ENCODE measurements at regions of chr9 and their contacts with region 1.

Region 1: GRCh38 chr9:37465249-37466036 is at the start of gene ZBTB5:
- DNase-seq: peak; percentile 98 to 99 (median 99)
- H3K4me3 ChIP-seq: peak within 1 kb of the TSS; percentile 95
- H3K27ac ChIP-seq: peak within 1 kb of the TSS; percentile 94 to 97
- H3K4me1 ChIP-seq: peaks cover 4% of the 10 kb centered on the region
- H3K27me3 ChIP-seq: no peaks in the 10 kb centered on the region
- CTCF ChIP-seq: no peak
- EP300 ChIP-seq: no peak
- POLR2A ChIP-seq: peak; percentile 59
- total RNA-seq, gene ZBTB5: 10.2 to 13.7 (median 11.8) TPM

Region 2: GRCh38 chr9:35756275-35757225 is 1708.9 kb before region 1 on chr9:
- intact Hi-C with region 1: loop called in 1 of 4 experiments (anchors 10 kb)
- DNase-seq: peak; percentile 73 to 81 (median 75)
- H3K4me3 ChIP-seq: peak overlapping the region; percentile 65
- H3K27ac ChIP-seq: peak overlapping the region; percentile 66 to 91
- H3K4me1 ChIP-seq: peaks cover 7% of the 10 kb centered on the region
- H3K27me3 ChIP-seq: no peaks in the 10 kb centered on the region
- CTCF ChIP-seq: peak; percentile 8 to 32 (median 31)
- EP300 ChIP-seq: no peak
- POLR2A ChIP-seq: no peak

Region 3: DNA sequence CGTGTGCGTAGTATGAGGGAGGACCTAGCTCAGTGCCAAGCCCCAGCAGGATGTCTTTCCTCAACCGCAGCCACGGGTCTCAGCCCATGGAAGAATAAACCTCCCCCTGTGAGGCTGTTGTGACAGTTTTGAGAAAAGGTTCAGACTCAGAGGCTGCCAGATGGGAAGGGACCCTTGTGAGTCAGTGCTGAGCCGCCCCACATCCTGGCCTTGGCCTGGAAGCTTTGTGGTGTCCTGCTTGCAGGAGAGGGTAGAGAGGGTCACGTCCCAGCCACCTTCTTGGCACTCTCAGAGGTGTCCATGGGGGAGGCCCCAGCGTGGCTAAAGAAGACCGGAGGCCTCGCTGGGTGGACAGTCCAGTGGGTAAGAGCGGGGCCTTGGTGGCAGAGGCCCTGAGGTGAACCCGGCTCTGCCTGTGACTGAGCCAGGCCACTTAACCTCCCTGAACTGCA is 40.1 kb before region 1 on chr9:
- intact Hi-C with region 1: loop called in 1 of 4 experiments (anchors 5 kb)
- DNase-seq: peak in 4 of 5 donors; percentile 33 to 65 (median 55)
- H3K4me3 ChIP-seq: no peak overlapping the region
- H3K27ac ChIP-seq: peak overlapping the region in 1 of 2 donors; percentile 0
- H3K4me1 ChIP-seq: peaks cover 24% of the 10 kb centered on the region
- H3K27me3 ChIP-seq: no peaks in the 10 kb centered on the region
- CTCF ChIP-seq: no peak
- EP300 ChIP-seq: no peak
- POLR2A ChIP-seq: no peak

Region 4: GRCh38 chr9:37449862-37450632 is 15.4 kb before region 1 on chr9:
- intact Hi-C with region 1: no loop called
- DNase-seq: no peak
- H3K4me3 ChIP-seq: no peak overlapping the region
- H3K27ac ChIP-seq: no peak overlapping the region
- H3K4me1 ChIP-seq: peaks cover 14% of the 10 kb centered on the region
- H3K27me3 ChIP-seq: no peaks in the 10 kb centered on the region
- CTCF ChIP-seq: no peak
- EP300 ChIP-seq: no peak
- POLR2A ChIP-seq: no peak

Region 5: GRCh38 chr9:37520641-37521040 is 55.2 kb after region 1 on chr9:
- intact Hi-C with region 1: no loop called
- DNase-seq: no peak
- H3K4me3 ChIP-seq: no peak overlapping the region
- H3K27ac ChIP-seq: no peak overlapping the region
- H3K4me1 ChIP-seq: no peaks in the 10 kb centered on the region
- H3K27me3 ChIP-seq: no peaks in the 10 kb centered on the region
- CTCF ChIP-seq: no peak
- EP300 ChIP-seq: no peak
- POLR2A ChIP-seq: no peak

Measured in ovary (tissue), 10 donors.